Activated CD4-positive, alpha-beta memory T cell treated with anti-CD3 and anti-CD28 coated beads for 36 hours (primary cell): ENCODE measurements at regions of chr3 and their contacts with region 1.

Region 1: DNA sequence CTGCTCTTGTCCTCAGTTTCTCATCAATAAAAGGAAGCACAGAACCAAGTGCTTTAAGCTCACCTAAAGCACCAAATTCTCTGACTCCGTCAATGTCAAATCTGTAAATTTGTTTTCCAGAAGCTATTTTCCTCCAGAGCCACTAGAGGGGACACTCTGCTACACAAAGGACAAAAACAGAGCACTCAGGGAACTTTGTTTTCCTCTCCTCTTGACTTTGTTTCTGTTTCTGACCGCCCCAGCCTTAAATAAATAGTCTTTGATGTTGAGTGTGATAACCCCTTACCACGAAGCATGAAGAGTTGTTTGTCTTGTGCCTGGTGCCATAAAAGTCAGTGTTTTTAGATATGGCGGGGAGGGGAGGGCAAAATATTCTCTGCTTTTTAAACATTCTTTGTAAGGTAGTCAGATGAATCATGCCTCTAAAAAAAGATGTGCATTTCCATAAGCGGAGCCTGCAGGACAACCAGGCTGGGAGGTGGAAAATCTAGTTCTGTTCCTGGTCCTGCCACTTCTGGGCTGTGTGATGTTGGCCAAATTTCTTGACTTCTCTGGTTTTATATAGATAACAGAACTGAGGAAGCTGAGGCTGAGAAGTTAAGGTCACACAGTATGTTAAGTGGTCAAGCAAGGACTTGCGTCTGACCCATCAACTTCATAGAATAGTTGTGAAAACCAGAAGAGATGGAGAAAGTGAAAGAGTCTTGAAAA is 7.3 kb upstream of the ZBTB38 start:
- DNase-seq: no peak
- H3K4me3 Mint-ChIP-seq: peak overlapping the region; percentile 30
- H3K27ac Mint-ChIP-seq: no peak overlapping the region
- H3K4me1 Mint-ChIP-seq: peaks cover 10% of the 10 kb centered on the region
- H3K27me3 Mint-ChIP-seq: peaks cover 1% of the 10 kb centered on the region

Region 2: GRCh38 chr3:140863580-140864009 is 497.4 kb before region 1 on chr3:
- CTCF ChIA-PET with region 1: no interaction called
- POLR2A ChIA-PET with region 1: no interaction called
- intact Hi-C with region 1: no loop called
- DNase-seq: peak; percentile 38
- H3K4me3 Mint-ChIP-seq: no peak overlapping the region
- H3K27ac Mint-ChIP-seq: no peak overlapping the region
- H3K4me1 Mint-ChIP-seq: no peaks in the 10 kb centered on the region
- H3K27me3 Mint-ChIP-seq: peaks cover 6% of the 10 kb centered on the region

Region 3: DNA sequence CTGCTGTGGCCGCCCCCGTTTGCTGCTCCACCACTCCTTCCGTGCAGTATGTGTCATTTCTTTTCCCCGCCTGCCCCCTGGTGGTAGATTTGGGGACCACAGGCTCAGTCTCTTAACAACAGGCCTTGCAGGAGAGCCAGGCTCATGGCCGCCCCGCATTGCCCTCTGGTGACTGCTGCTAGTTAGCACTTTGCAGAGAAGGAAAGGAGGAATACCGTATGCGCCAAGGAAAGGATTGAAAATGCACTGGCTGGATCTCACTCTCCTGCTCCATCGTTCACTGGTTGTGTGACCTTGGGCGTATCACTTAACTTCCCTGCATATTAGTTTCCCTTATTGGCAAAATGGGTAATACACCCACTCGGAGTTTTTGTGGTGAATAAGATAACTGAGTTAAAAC is 168.7 kb before region 1 on chr3:
- CTCF ChIA-PET with region 1: no interaction called
- POLR2A ChIA-PET with region 1: no interaction called
- intact Hi-C with region 1: no loop called
- DNase-seq: peak; percentile 98
- H3K4me3 Mint-ChIP-seq: no peak overlapping the region
- H3K27ac Mint-ChIP-seq: no peak overlapping the region
- H3K4me1 Mint-ChIP-seq: peaks cover 13% of the 10 kb centered on the region
- H3K27me3 Mint-ChIP-seq: peaks cover 7% of the 10 kb centered on the region

Region 4: GRCh38 chr3:141303481-141304223 is 57.4 kb before region 1 on chr3:
- CTCF ChIA-PET with region 1: interaction called, 19 read pairs
- POLR2A ChIA-PET with region 1: no interaction called
- intact Hi-C with region 1: no loop called
- DNase-seq: peak; percentile 56
- H3K4me3 Mint-ChIP-seq: no peak overlapping the region
- H3K27ac Mint-ChIP-seq: no peak overlapping the region
- H3K4me1 Mint-ChIP-seq: peaks cover 44% of the 10 kb centered on the region
- H3K27me3 Mint-ChIP-seq: no peaks in the 10 kb centered on the region

Region 5: GRCh38 chr3:141431411-141432378 is 70.7 kb after region 1 on chr3:
- CTCF ChIA-PET with region 1: interaction called, 15 read pairs
- POLR2A ChIA-PET with region 1: no interaction called
- intact Hi-C with region 1: no loop called
- DNase-seq: no peak
- H3K4me3 Mint-ChIP-seq: no peak overlapping the region
- H3K27ac Mint-ChIP-seq: no peak overlapping the region
- H3K4me1 Mint-ChIP-seq: peaks cover 27% of the 10 kb centered on the region
- H3K27me3 Mint-ChIP-seq: no peaks in the 10 kb centered on the region